Psoas muscle (tissue), 8 donors: ENCODE measurements at regions of chr3 and their contacts with region 1.

Region 1: GRCh38 chr3:17759901-17760300 is 17.5 kb upstream of the TBC1D5 start:
- DNase-seq: no peak
- ATAC-seq: no peak
- H3K4me3 ChIP-seq: no peak overlapping the region
- H3K27ac ChIP-seq: no peak overlapping the region
- H3K4me1 ChIP-seq: no peaks in the 10 kb centered on the region
- H3K27me3 ChIP-seq: no peaks in the 10 kb centered on the region
- CTCF ChIP-seq: no peak

Region 2: DNA sequence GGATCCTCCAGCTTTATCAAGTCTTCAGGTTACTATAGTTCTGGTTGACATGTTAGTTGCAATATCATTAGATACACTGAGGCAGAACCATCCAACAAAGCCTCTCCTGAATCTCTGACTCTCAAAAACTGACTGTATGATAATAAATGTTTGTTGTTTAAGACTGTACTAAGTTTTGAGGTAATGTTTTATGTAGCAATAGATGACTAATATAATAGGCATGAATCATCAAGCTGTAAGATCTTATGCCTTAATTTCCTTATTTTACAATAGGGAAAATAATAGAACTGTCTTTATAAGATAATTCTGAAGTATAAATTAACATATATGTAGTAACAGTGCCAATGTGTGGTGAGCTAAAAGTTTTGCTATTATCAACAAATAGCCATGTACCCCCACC is 71.5 kb after region 1 on chr3:
- intact Hi-C with region 1: loop called in 1 of 2 experiments (anchors 1 kb)
- DNase-seq: no peak
- ATAC-seq: no peak
- H3K4me3 ChIP-seq: no peak overlapping the region
- H3K27ac ChIP-seq: no peak overlapping the region
- H3K4me1 ChIP-seq: no peaks in the 10 kb centered on the region
- H3K27me3 ChIP-seq: peaks cover 0 to 5% (median 0%) of the 10 kb centered on the region in 3 donors
- CTCF ChIP-seq: no peak

Region 3: GRCh38 chr3:17846466-17846865 is 86.6 kb after region 1 on chr3:
- intact Hi-C with region 1: no loop called
- DNase-seq: no peak
- ATAC-seq: no peak
- H3K4me3 ChIP-seq: no peak overlapping the region
- H3K27ac ChIP-seq: no peak overlapping the region
- H3K4me1 ChIP-seq: no peaks in the 10 kb centered on the region
- H3K27me3 ChIP-seq: no peaks in the 10 kb centered on the region
- CTCF ChIP-seq: no peak

Region 4: DNA sequence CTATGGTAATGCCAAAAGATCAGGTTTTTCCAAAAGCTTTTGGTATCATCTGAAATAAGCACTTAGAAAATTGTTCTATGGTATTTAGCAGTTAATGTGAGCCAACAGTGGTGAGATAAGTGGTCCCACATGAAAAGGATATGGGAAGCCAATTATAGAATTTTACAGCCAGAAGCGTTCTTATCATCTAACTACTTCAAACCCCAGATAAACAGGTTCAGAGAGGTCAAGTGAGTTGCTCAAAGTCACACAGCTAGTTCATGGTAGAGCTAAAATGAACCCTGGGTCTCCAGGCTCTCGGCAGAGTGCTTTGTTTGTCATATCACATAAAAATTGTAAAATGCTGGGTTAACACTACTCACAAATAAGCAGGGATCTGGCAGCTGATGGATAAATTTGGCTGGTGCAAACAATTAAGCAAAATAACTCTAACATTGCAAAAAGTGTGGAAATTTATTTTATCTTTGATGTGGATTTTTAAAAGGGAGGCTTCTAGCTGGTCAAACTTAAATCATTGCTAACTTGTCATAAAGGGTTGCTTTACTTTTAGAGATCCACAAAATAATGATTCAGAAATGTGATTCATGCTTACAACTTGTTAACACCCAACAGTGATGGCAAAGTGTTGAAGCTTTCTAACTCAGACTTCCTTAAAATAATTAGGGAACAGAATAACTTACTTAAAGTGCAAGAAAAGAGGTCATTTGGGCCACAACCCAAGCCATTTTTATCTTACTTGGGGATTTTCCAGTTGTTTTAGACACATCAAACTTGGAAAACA is 185.3 kb after region 1 on chr3:
- intact Hi-C with region 1: no loop called
- DNase-seq: no peak
- ATAC-seq: no peak
- H3K4me3 ChIP-seq: no peak overlapping the region
- H3K27ac ChIP-seq: no peak overlapping the region
- H3K4me1 ChIP-seq: no peaks in the 10 kb centered on the region
- H3K27me3 ChIP-seq: no peaks in the 10 kb centered on the region
- CTCF ChIP-seq: no peak